AG04450 (cell line): ENCODE measurements at regions of chr12 and their contacts with region 1.

Region 1: GRCh38 chr12:11202811-11203210 is 16.1 kb upstream of the TAS2R42 start:
- DNase-seq: no peak
- H3K4me3 ChIP-seq: no peak overlapping the region
- H3K27ac ChIP-seq: no peak overlapping the region
- H3K27me3 ChIP-seq: no peaks in the 10 kb centered on the region
- CTCF ChIP-seq: no peak

Region 2: GRCh38 chr12:10759657-10760056 is 443.2 kb before region 1 on chr12:
- CTCF ChIA-PET with region 1: interaction called, 14 read pairs
- POLR2A ChIA-PET with region 1: no interaction called
- DNase-seq: no peak
- H3K4me3 ChIP-seq: no peak overlapping the region
- H3K27ac ChIP-seq: no peak overlapping the region
- H3K27me3 ChIP-seq: peaks cover 4% of the 10 kb centered on the region
- CTCF ChIP-seq: no peak

Region 3: GRCh38 chr12:10771132-10771733 is 431.6 kb before region 1 on chr12:
- CTCF ChIA-PET with region 1: interaction called, 200 read pairs
- POLR2A ChIA-PET with region 1: no interaction called
- DNase-seq: peak; percentile 18
- H3K4me3 ChIP-seq: no peak overlapping the region
- H3K27ac ChIP-seq: no peak overlapping the region
- H3K27me3 ChIP-seq: peaks cover 6% of the 10 kb centered on the region
- CTCF ChIP-seq: peak; percentile 65

Region 4: DNA sequence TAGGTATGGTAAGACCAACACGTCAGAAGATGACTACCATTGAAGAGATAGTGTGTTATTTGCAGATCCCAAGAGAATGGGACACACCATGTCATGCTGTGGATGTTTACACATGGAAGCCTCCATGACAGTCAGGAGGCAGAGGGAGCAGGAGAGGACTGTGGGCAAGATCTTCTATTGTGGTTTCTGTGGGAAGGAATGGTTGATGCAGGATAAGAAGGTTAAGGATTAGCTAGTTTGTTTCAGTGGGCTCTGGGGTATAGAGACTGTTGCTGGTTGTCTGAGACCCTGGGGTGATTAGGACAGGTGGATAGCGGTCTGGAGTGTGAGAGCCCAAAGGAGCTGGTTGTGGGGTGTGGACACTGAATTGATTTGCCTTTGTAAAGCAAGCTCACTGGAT is 423.7 kb before region 1 on chr12:
- CTCF ChIA-PET with region 1: interaction called, 200 read pairs
- POLR2A ChIA-PET with region 1: no interaction called
- DNase-seq: no peak
- H3K4me3 ChIP-seq: no peak overlapping the region
- H3K27ac ChIP-seq: no peak overlapping the region
- H3K27me3 ChIP-seq: no peaks in the 10 kb centered on the region
- CTCF ChIP-seq: no peak

Region 5: DNA sequence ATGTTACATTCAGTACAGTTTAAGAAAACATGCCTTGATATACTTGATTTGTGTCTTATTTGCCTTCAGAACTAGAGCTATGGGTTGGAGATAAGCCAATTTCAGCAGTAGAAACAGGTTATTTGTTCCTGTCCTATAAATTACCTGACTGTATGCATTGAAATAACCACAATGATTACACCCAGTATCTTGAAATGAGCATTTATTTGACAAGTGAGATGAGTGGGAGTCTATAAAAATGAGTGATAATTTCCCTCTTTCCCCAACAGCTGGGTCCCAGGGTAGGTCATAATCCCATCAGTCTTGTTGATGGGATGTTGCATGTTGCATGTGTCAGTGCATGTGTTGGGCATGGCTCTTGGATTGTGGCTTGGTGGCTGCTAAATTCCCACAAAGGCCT is 19.8 kb before region 1 on chr12:
- CTCF ChIA-PET with region 1: interaction called, 11 read pairs
- POLR2A ChIA-PET with region 1: no interaction called
- DNase-seq: no peak
- H3K4me3 ChIP-seq: no peak overlapping the region
- H3K27ac ChIP-seq: no peak overlapping the region
- H3K27me3 ChIP-seq: no peaks in the 10 kb centered on the region
- CTCF ChIP-seq: no peak

Region 6: DNA sequence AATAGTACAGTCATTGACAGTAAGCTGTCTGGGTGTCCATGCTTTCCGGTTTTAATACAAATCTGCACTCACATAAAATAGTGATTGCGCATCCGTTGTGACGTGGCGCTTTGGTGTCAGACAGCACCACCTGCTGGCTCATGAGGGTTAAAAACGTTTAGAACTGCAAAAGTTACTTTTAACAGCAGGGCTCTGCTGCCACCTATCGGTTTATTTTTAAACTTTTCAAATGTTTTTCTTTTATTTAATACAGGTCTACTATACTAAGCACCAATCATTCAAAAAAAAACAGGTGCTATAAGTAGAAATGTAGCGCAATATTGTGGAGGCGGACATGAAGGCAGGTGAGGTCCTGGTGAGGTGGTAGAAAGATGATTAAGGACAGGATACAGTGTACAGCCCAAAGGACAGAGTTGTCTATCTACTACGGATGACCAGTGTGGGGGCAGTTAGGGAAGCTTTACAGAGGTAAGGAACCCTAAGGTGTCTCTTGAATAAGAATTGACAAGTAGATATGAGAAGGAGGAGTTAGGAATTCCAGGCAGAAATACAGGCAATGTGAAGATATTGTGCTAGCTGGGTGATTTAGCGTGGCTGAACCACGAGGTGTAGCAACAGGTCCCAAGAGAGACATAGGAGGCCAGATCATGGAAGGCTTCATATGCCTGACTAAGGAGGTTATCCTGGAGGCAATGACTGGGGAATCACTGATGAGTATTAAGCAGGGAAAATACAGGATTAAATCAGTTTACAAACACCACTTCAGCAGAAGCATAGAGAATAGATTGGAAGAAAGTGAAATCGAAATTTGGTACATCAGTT is 284.0 kb after region 1 on chr12:
- CTCF ChIA-PET with region 1: interaction called, 17 read pairs
- POLR2A ChIA-PET with region 1: no interaction called
- DNase-seq: peak; percentile 62
- H3K4me3 ChIP-seq: no peak overlapping the region
- H3K27ac ChIP-seq: no peak overlapping the region
- H3K27me3 ChIP-seq: peaks cover 5% of the 10 kb centered on the region
- CTCF ChIP-seq: peak; percentile 98